Caco-2 (cell line): ENCODE measurements at regions of chr15 and their contacts with region 1.

Region 1: DNA sequence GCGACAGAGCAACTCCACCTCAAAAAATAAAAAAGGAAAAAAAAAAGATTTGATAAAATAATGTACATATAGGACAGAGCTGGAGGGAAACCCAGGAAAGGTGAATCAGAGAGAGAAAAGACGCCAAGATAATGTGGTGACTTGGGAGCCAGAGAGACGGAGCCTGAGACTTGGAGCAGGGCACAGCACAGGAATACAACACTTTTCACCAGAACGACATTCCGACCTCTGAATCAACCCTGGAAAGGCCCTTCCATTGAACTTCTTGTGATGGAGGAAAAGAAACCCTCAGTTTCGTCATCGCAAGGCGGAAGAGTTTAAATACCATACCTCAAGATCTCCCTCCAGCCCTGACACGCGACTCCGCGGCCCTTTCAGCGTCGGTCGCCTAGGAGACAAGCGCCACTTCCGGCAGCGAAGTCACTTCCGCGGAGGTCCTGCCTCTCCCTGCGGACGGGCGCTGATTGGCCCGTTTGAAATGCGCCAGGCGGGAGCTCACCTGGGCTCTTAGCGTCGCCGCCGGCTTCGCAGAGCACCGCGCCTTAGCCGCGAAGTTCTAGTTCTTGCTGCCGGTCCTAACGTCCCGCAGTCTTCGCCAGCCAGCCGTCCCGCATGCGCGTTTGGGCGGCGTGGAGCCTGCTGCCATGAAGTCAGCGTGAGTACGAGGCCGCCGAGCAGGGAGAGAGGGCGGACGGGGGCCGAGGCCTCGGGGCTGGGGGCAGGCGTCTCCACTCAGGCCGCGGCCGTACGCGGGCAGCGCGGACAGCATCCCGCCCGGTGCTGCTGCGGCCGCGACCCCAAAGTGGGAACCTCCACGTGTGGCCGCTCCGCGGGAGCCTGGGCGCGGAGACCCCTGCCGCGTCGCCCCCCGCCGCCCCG is at the start of gene KIF23:
- DNase-seq: peak; percentile 94
- H3K4me3 ChIP-seq: peak within 1 kb of the TSS; percentile 88
- H3K4me3 Mint-ChIP-seq: peak within 1 kb of the TSS; percentile 92
- H3K27ac Mint-ChIP-seq: peak within 1 kb of the TSS; percentile 95
- H3K4me1 ChIP-seq: peaks cover 24% of the 10 kb centered on the region
- H3K4me1 Mint-ChIP-seq: no peaks in the 10 kb centered on the region
- H3K27me3 ChIP-seq: no peaks in the 10 kb centered on the region
- H3K27me3 Mint-ChIP-seq: no peaks in the 10 kb centered on the region
- CTCF ChIP-seq: no peak
- total RNA-seq, gene KIF23: 67.1 and 74.2 TPM in 2 replicates

Region 2: GRCh38 chr15:68042156-68042854 is 1371.8 kb before region 1 on chr15:
- CTCF ChIA-PET with region 1: no interaction called
- POLR2A ChIA-PET with region 1: no interaction called
- intact Hi-C with region 1: no loop called
- DNase-seq: no peak
- H3K4me3 ChIP-seq: no peak overlapping the region
- H3K4me3 Mint-ChIP-seq: peak overlapping the region; percentile 25
- H3K27ac Mint-ChIP-seq: no peak overlapping the region
- H3K4me1 ChIP-seq: peaks cover 15% of the 10 kb centered on the region
- H3K4me1 Mint-ChIP-seq: peaks cover 9% of the 10 kb centered on the region
- H3K27me3 ChIP-seq: no peaks in the 10 kb centered on the region
- H3K27me3 Mint-ChIP-seq: no peaks in the 10 kb centered on the region
- CTCF ChIP-seq: no peak

Region 3: DNA sequence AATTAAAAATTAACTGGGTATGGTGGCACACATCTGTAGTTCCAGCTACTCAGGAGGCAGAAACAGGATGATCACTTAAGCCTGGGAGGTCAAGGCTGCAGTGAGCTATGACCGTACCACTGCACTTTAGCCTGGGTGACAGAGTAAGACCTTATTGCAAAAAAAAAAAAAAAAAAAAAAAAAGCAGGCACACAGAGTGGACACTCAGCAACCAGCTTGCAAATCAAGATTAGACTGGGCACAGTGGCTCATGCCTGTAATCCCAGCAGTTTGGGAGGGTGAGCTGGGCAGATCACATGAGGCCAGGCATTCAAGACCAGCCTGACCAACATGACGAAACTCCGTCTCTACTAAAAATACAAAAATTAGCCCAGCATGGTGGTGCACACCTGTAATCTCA is 1190.0 kb before region 1 on chr15:
- CTCF ChIA-PET with region 1: no interaction called
- POLR2A ChIA-PET with region 1: interaction called, 10 read pairs
- intact Hi-C with region 1: no loop called
- DNase-seq: peak in 1 of 2 experiments; percentile 12
- H3K4me3 ChIP-seq: no peak overlapping the region
- H3K4me3 Mint-ChIP-seq: no peak overlapping the region
- H3K27ac Mint-ChIP-seq: no peak overlapping the region
- H3K4me1 ChIP-seq: peaks cover 6% of the 10 kb centered on the region; the same call in 1 of the 2 replicates
- H3K4me1 Mint-ChIP-seq: peaks cover 9% of the 10 kb centered on the region
- H3K27me3 ChIP-seq: no peaks in the 10 kb centered on the region
- H3K27me3 Mint-ChIP-seq: no peaks in the 10 kb centered on the region
- CTCF ChIP-seq: no peak

Region 4: DNA sequence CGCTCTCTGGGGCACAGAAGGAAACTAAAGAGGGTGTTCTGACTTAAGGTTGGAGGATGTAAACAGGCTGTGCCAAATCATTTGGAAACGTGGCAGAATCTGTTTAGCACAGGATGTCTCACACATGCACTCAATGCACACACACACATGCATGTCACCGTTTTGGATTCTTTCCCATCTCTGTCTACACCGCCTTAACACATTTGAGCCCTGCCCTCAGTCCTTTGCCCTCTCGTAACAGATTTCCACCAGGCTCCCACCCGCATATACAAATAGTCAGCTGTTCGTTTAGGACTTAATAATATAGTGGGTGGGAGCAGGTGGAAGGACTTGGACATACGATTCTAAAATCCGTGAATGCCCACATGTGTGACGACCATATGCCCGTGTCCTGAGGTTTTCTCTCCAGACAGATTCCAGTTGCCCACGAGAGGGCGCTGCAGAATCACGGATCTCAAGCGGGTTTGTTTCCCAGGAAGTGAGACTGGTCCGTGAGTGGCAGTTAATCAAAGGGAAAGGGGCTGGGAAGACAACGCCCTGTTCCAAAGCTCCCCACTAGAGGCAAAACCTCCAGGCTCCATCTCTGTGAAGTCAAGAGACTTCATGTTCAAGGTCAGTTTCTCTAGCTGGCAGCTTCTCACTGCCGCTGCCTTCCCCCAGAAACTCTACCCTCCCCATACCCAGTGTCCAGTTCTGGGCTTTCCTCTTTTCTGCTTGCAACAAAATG is 355.1 kb before region 1 on chr15:
- CTCF ChIA-PET with region 1: interaction called, 3 read pairs
- POLR2A ChIA-PET with region 1: no interaction called
- intact Hi-C with region 1: loop called (anchors 5 kb)
- DNase-seq: peak; percentile 85 to 87
- H3K4me3 ChIP-seq: no peak overlapping the region
- H3K4me3 Mint-ChIP-seq: no peak overlapping the region
- H3K27ac Mint-ChIP-seq: no peak overlapping the region
- H3K4me1 ChIP-seq: no peaks in the 10 kb centered on the region
- H3K4me1 Mint-ChIP-seq: no peaks in the 10 kb centered on the region
- H3K27me3 ChIP-seq: peaks cover 2% of the 10 kb centered on the region; the same call in 1 of the 2 replicates
- H3K27me3 Mint-ChIP-seq: peaks cover 10% of the 10 kb centered on the region
- CTCF ChIP-seq: peak; percentile 86 to 89

Region 5: DNA sequence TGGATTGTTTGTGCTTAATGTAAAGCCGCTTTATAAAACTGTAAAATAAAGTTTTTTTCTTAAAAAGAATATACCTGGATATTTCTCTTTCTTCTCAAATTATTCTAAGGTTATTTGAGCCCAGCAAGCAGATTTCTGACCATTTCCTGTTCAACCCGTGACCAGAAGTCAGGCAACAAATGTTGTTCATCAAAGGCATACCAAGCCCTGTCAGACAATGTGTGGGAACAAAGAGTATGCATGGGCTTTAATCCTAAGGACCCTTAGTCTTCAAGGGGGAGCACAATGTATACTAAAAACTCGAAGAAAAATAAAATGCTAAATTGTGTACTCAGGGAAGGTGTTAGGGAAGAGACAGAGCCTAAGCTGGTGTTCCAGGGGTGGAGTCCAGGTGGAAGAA is 141.9 kb before region 1 on chr15:
- CTCF ChIA-PET with region 1: no interaction called
- POLR2A ChIA-PET with region 1: no interaction called
- intact Hi-C with region 1: no loop called
- DNase-seq: no peak
- H3K4me3 ChIP-seq: no peak overlapping the region
- H3K4me3 Mint-ChIP-seq: no peak overlapping the region
- H3K27ac Mint-ChIP-seq: no peak overlapping the region
- H3K4me1 ChIP-seq: peaks cover 11% of the 10 kb centered on the region; the same call in 1 of the 2 replicates
- H3K4me1 Mint-ChIP-seq: peaks cover 25% of the 10 kb centered on the region
- H3K27me3 ChIP-seq: no peaks in the 10 kb centered on the region
- H3K27me3 Mint-ChIP-seq: no peaks in the 10 kb centered on the region
- CTCF ChIP-seq: no peak

Region 6: GRCh38 chr15:69443032-69443611 is 29.1 kb after region 1 on chr15:
- CTCF ChIA-PET with region 1: no interaction called
- POLR2A ChIA-PET with region 1: interaction called, 13 read pairs
- intact Hi-C with region 1: no loop called
- DNase-seq: no peak
- H3K4me3 ChIP-seq: no peak overlapping the region
- H3K4me3 Mint-ChIP-seq: no peak overlapping the region
- H3K27ac Mint-ChIP-seq: no peak overlapping the region
- H3K4me1 ChIP-seq: no peaks in the 10 kb centered on the region
- H3K4me1 Mint-ChIP-seq: no peaks in the 10 kb centered on the region
- H3K27me3 ChIP-seq: no peaks in the 10 kb centered on the region
- H3K27me3 Mint-ChIP-seq: no peaks in the 10 kb centered on the region
- CTCF ChIP-seq: no peak

Region 7: DNA sequence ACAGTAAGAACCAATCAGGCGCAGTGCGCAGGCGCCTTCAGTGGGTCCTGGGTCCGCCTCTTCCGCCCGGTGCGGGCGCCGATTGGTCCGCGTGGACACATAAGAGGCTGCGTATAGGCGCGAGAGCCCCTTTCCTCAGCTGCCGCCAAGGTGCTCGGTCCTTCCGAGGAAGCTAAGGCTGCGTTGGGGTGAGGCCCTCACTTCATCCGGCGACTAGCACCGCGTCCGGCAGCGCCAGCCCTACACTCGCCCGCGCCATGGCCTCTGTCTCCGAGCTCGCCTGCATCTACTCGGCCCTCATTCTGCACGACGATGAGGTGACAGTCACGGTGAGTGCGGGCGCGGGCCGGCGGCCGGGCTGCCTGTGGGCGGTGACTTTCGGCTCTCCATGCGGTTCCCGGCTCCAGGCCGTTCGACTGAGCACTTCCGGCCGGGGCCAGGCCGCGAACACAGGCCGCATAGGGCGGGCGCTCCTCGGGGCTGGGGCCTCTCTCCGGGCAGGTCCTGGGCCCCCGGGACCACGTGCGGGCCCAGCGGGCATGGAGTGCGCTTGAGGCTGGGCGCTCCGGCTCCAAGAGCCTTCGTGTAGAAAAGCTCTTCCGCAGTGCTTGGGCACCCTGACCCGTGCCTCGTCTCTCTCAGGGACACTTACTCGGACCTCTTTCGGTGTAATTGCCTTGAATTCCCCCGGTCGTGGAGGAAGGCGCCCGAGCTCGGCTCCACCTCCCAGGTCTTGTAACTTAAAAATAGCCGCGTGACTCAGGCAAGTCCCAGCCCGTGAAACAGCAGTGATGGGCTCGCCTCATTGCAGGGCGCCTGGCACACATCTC is 38.8 kb after region 1 on chr15 and contains the start of gene RPLP1:
- CTCF ChIA-PET with region 1: no interaction called
- POLR2A ChIA-PET with region 1: interaction called, 23 read pairs
- intact Hi-C with region 1: loop called (anchors 2 kb)
- DNase-seq: peak; percentile 92 to 95
- H3K4me3 ChIP-seq: peak within 1 kb of the TSS; percentile 78
- H3K4me3 Mint-ChIP-seq: peak within 1 kb of the TSS; percentile 88
- H3K27ac Mint-ChIP-seq: peak within 1 kb of the TSS; percentile 93
- H3K4me1 ChIP-seq: peaks cover 7% of the 10 kb centered on the region; the same call in 1 of the 2 replicates
- H3K4me1 Mint-ChIP-seq: peaks cover 12% of the 10 kb centered on the region
- H3K27me3 ChIP-seq: no peaks in the 10 kb centered on the region
- H3K27me3 Mint-ChIP-seq: no peaks in the 10 kb centered on the region
- CTCF ChIP-seq: no peak
- total RNA-seq, gene RPLP1: 1,587 and 1,689 TPM in 2 replicates

Region 8: DNA sequence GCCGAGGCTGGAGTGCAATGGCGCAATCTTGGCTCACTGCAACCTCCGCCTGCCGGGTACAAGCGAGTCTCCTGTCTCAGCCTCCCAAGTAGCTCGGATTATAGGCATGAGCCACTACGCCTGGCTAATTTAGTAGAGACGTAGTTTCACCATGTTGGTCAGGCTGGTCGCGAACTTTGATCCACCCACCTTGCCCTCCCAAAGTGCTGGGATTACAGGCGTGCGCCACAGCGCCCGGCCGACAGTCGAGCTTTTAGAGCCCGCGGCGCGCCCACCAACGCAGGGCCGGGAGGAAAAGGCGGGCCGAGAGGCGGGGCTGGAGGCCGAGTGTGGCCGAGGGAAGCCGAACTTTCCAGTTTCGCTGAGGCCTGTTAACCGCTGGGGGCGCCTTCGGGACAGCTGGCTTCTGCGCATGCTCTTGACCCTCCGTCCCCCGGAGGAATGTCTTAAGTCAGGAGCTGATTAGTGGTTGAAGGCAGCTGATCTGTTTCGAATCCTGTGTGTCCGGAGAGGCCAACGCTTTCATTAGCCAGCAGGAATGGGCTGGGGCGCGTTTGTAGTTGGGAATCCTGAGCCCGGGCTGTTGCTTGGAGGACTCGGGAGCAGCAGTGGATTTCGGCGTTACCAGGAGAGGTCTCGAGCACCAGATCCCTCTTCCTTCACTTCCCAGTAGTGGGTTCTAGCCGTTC is 48.6 kb after region 1 on chr15:
- CTCF ChIA-PET with region 1: interaction called, 11 read pairs
- POLR2A ChIA-PET with region 1: interaction called, 8 read pairs
- intact Hi-C with region 1: no loop called
- DNase-seq: peak; percentile 95 to 96
- H3K4me3 ChIP-seq: peak overlapping the region; percentile 46
- H3K4me3 Mint-ChIP-seq: peak overlapping the region; percentile 88
- H3K27ac Mint-ChIP-seq: peak overlapping the region; percentile 93
- H3K4me1 ChIP-seq: peaks cover 25% of the 10 kb centered on the region
- H3K4me1 Mint-ChIP-seq: peaks cover 17% of the 10 kb centered on the region
- H3K27me3 ChIP-seq: no peaks in the 10 kb centered on the region
- H3K27me3 Mint-ChIP-seq: no peaks in the 10 kb centered on the region
- CTCF ChIP-seq: peak; percentile 78 to 79